Cardiac septum (tissue), 1 donor: ENCODE measurements at regions of chr20 and their contacts with region 1.

Region 1: DNA sequence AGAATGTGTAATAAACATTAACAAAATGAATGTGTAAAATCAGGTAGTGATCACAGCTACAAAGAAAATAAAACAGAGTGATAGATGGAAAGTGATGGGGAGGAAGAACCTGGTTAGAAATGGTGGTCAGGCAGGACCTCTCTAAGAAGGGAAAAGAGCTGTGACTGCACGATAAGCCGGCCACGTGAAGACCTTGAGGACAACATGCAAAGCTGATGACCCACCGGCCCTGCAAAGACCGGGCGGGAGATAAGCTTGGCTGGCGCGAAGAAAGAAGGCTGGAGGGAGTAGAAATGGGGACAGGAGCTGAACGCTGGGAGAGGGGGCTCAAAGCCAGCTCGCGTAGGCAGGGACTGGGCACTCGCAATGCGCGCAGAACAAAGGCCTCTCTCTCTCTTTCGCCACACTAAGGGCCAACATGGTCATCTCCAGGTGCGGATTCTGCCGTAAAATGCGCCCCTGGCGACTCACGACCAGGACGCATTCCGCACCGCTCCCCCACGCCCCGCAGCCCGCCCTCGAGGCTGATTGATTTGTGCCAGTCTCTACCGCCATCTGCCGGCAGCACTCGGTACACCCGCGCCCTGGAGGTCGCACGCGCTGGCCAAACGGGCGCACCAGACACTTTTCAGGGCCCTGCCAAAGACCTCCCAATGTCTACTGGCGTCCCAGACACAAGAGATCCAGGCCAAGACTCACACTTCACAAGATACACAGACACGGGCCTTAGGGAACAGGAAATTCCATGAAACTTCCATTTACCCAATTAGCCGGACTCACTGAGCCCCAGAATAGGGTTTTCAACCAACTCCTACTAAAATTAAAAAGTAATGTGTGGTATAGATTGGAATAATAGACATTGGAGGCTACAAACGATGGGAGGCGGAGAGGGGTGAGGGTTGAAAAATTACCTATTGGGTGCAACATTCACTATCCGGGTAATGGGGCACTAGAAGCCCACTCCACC is 9.4 kb downstream of the DEFB132 start:
- DNase-seq: peak; percentile 87

Region 2: DNA sequence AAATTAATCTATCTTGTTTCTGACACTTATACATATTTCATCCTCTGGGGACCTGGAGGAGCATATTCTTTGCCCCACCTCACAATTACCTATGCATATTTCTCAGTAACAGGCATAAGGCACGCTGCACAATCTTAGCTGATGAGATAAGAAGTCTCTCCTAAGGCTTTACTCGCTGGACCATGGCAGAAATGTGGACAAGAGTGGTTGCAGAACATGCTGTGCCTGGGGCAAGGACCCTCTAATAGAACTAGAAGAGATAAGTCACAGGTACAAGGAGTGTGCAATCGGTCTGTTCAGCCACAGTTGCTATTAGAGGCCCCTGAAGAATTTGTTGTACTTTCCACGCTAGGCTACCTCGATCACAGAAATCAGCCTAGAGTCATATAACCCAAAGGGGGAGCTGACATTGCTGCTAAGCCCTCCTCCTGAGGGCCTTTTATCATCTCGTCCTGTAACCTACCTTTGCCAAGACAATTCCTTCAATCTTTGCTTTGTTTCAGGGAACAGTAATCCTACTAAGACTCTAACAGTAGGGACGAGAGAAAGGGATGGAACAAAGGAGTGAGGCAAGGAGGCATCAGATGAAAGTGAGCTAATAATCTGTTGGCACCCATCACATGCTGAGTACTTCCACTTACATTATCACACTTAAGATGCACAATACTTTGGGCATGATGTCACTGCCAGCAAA is 55.9 kb before region 1 on chr20:
- intact Hi-C with region 1: loop called (anchors 5 kb)
- DNase-seq: no peak